CD4-positive, alpha-beta memory T cell (primary cell): ENCODE measurements at regions of chr4 and their contacts with region 1.

Region 1: DNA sequence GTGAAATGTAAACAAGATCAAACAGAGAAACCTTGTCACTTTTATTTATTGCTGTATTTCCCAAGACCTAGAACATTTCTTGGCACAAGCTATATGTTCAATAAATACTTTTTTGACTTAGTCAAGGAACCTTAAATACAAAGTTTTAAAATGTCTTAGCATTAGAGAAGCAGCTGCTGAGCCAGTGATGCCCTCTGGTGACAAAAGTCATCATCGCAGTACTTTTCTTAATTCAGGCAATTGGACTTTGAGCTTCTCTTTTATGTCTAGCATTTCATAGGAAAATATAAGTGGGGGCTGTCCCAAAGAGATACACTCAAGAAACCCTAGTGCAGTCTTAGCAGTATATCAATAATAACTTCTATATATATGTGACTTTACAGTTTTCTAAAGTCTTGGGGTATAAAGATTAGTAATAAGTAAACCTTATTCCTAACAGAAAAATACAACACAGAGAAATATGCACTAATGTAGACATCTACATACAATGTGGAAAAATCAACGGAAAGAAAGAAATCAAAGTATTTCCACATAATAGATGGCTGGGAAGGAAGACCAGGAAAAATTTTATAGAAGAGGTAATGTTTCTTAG is 118.4 kb downstream of the DTHD1 start:
- DNase-seq: peak; percentile 44 to 60 (median 52)
- H3K4me3 ChIP-seq: no peak overlapping the region
- H3K4me3 Mint-ChIP-seq: no peak overlapping the region
- H3K27ac ChIP-seq: no peak overlapping the region
- H3K27ac Mint-ChIP-seq: no peak overlapping the region
- H3K4me1 ChIP-seq: peaks cover 5% of the 10 kb centered on the region
- H3K4me1 Mint-ChIP-seq: peaks cover 4 to 8% (median 5%) of the 10 kb centered on the region in 4 donors
- H3K27me3 ChIP-seq: no peaks in the 10 kb centered on the region
- H3K27me3 Mint-ChIP-seq: no peaks in the 10 kb centered on the region

Region 2: GRCh38 chr4:35934320-35934981 is 465.4 kb before region 1 on chr4:
- CTCF ChIA-PET with region 1: no interaction called
- POLR2A ChIA-PET with region 1: no interaction called
- intact Hi-C with region 1: no loop called
- DNase-seq: peak in 2 of 5 donors; percentile 5 to 6
- H3K4me3 ChIP-seq: no peak overlapping the region
- H3K4me3 Mint-ChIP-seq: no peak overlapping the region
- H3K27ac ChIP-seq: no peak overlapping the region
- H3K27ac Mint-ChIP-seq: no peak overlapping the region
- H3K4me1 ChIP-seq: no peaks in the 10 kb centered on the region
- H3K4me1 Mint-ChIP-seq: peaks cover 0 to 3% (median 0%) of the 10 kb centered on the region in 4 donors
- H3K27me3 ChIP-seq: no peaks in the 10 kb centered on the region
- H3K27me3 Mint-ChIP-seq: peaks cover 0 to 2% of the 10 kb centered on the region in 2 donors

Region 3: GRCh38 chr4:36255577-36255976 is 144.3 kb before region 1 on chr4:
- CTCF ChIA-PET with region 1: interaction called, 23 read pairs
- POLR2A ChIA-PET with region 1: interaction called, 10 read pairs
- intact Hi-C with region 1: no loop called
- DNase-seq: peak; percentile 83 to 91 (median 89)
- H3K4me3 ChIP-seq: no peak overlapping the region
- H3K4me3 Mint-ChIP-seq: peak overlapping the region; percentile 71 to 88 (median 80)
- H3K27ac ChIP-seq: peak overlapping the region; percentile 27
- H3K27ac Mint-ChIP-seq: peak overlapping the region; percentile 83 to 96 (median 92)
- H3K4me1 ChIP-seq: peaks cover 48% of the 10 kb centered on the region
- H3K4me1 Mint-ChIP-seq: peaks cover 35 to 55% (median 40%) of the 10 kb centered on the region in 4 donors
- H3K27me3 ChIP-seq: no peaks in the 10 kb centered on the region
- H3K27me3 Mint-ChIP-seq: no peaks in the 10 kb centered on the region

Region 4: DNA sequence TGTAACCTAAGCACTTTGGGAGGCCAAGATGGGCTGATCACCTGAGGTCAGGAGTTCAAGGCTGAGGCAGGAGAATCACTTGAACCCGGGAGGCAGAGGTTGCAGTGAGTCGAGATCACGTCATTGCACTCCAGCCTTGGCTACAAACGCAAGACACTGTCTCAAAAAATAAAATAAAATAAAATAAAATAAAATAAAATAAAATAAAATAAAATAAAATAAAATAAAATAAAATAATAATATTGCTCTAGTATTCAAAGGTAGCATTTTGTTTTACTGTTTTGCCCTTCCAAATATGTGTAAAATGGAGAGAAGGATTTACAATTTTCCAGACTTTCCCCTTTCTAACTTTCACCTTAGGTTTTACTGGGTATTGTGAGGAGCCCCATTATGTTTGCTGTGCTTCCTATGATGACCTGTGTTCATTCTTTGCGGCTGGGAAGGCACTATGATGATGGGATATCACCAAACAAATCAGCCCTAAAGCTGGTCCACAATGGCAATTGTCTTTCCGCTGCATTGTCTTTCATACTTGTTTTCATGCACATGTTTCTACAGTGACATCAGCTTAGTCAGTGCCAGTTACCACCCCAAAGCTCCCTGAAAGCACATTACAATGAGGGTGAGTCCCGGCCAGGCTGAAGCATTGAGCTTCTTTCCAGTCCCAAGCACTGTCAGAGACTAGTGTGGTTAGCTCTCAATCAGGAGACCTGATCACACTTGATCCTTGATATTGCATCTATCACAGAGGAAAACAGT is 67.7 kb before region 1 on chr4:
- CTCF ChIA-PET with region 1: interaction called, 23 read pairs
- POLR2A ChIA-PET with region 1: no interaction called
- intact Hi-C with region 1: no loop called
- DNase-seq: no peak
- H3K4me3 ChIP-seq: no peak overlapping the region
- H3K4me3 Mint-ChIP-seq: no peak overlapping the region
- H3K27ac ChIP-seq: no peak overlapping the region
- H3K27ac Mint-ChIP-seq: no peak overlapping the region
- H3K4me1 ChIP-seq: peaks cover 12% of the 10 kb centered on the region
- H3K4me1 Mint-ChIP-seq: peaks cover 11 to 20% (median 15%) of the 10 kb centered on the region in 4 donors
- H3K27me3 ChIP-seq: no peaks in the 10 kb centered on the region
- H3K27me3 Mint-ChIP-seq: no peaks in the 10 kb centered on the region

Region 5: DNA sequence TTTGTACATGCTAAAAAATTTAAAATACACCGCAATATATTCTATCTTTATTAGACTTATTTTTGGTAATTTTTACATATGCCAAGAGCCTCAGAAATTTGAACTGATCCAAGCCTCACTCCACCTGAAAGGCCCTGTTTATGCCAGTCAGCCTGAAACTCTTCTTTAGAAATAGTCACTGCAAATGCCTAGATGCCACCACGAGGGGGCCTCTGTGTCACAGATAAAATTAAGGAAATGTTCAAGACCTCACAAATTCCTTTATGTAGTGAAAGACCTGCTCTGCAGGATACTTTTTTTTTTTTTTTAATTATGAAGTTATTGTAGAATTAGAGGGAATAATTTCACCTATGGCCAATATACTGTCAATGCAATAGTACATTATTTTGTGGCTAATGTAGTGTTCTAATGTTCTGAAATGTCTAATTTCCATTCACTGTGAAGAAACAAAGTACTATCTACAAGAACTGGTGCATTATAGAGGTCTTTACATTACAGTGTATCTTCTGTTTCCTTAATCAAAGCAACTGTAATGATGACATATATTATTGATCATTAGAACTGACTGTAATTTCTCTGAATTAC is 48.7 kb before region 1 on chr4:
- CTCF ChIA-PET with region 1: interaction called, 105 read pairs
- POLR2A ChIA-PET with region 1: interaction called, 10 read pairs
- intact Hi-C with region 1: loop called (anchors 1 kb)
- DNase-seq: peak; percentile 65 to 73 (median 70)
- H3K4me3 ChIP-seq: no peak overlapping the region
- H3K4me3 Mint-ChIP-seq: no peak overlapping the region
- H3K27ac ChIP-seq: no peak overlapping the region
- H3K27ac Mint-ChIP-seq: peak overlapping the region in 2 of 7 donors; percentile 16 to 59
- H3K4me1 ChIP-seq: no peaks in the 10 kb centered on the region
- H3K4me1 Mint-ChIP-seq: peaks cover 5 to 13% (median 7%) of the 10 kb centered on the region in 4 donors
- H3K27me3 ChIP-seq: no peaks in the 10 kb centered on the region
- H3K27me3 Mint-ChIP-seq: peaks cover 0 to 3% of the 10 kb centered on the region in 2 donors

Region 6: GRCh38 chr4:36385951-36386571 is 13.8 kb before region 1 on chr4:
- CTCF ChIA-PET with region 1: interaction called, 55 read pairs
- POLR2A ChIA-PET with region 1: interaction called, 28 read pairs
- intact Hi-C with region 1: loop called (anchors 1 kb)
- DNase-seq: peak; percentile 75 to 83 (median 79)
- H3K4me3 ChIP-seq: no peak overlapping the region
- H3K4me3 Mint-ChIP-seq: peak overlapping the region; percentile 18 to 85 (median 64)
- H3K27ac ChIP-seq: peak overlapping the region; percentile 39
- H3K27ac Mint-ChIP-seq: peak overlapping the region; percentile 78 to 99 (median 96)
- H3K4me1 ChIP-seq: peaks cover 23% of the 10 kb centered on the region
- H3K4me1 Mint-ChIP-seq: peaks cover 20 to 32% (median 23%) of the 10 kb centered on the region in 4 donors
- H3K27me3 ChIP-seq: no peaks in the 10 kb centered on the region
- H3K27me3 Mint-ChIP-seq: no peaks in the 10 kb centered on the region